ENCODE measurements at regions of chr18 and their contacts with region 1.

Region 1: GRCh38 chr18:7133181-7133580 is 15.6 kb upstream of the LAMA1 start:
- DNase-seq: no peak
- H3K4me3 ChIP-seq: no peak overlapping the region
- H3K27ac ChIP-seq: no peak overlapping the region
- H3K4me1 ChIP-seq: no peaks in the 10 kb centered on the region
- H3K27me3 ChIP-seq: no peaks in the 10 kb centered on the region
- CTCF ChIP-seq: no peak
- EP300 ChIP-seq: no peak
- POLR2A ChIP-seq: no peak
- RAD21 ChIP-seq: no peak

Region 2: DNA sequence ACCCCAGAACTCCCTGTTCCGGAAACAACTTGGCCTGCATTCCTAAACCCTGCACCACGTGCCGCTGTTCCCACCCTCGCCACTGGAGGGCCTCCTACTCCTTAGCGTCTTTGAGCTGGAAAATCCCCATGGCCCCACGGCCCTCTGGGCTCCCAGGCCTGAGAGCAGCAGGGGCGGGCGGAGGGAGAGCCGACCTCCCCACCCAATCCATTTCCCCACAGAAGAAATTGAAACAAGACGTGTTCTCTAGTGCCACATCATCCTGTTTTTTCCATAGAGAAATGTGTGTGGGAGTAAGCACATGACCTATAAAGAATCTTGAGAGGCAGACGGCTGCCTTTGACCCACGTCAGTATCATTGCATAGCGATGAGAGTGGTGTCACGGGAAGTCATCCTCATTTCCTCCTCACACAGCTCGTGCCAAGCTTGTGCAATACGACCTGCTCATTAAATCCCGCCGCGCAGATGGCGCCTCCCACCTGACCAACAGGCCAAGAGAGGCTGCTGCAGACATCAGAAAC is 94.8 kb before region 1 on chr18:
- CTCF ChIA-PET with region 1: interaction called, 11 read pairs
- POLR2A ChIA-PET with region 1: no interaction called
- DNase-seq: peak; percentile 29 to 93
- H3K4me3 ChIP-seq: no peak overlapping the region
- H3K27ac ChIP-seq: no peak overlapping the region
- H3K4me1 ChIP-seq: 0 out of 7 replicates have a peak, but pooled peaks cover 0 to 2% (median 0%) of the 10 kb centered on the region in 4 experiments
- H3K27me3 ChIP-seq: no peaks in the 10 kb centered on the region
- CTCF ChIP-seq: peak; percentile 89 to 97 (median 93)
- EP300 ChIP-seq: no peak
- POLR2A ChIP-seq: no peak
- RAD21 ChIP-seq: peak; percentile 90 to 92

Measured in H1 (cell line).